ENCODE measurements at regions of chr5 and their contacts with region 1.

Region 1: DNA sequence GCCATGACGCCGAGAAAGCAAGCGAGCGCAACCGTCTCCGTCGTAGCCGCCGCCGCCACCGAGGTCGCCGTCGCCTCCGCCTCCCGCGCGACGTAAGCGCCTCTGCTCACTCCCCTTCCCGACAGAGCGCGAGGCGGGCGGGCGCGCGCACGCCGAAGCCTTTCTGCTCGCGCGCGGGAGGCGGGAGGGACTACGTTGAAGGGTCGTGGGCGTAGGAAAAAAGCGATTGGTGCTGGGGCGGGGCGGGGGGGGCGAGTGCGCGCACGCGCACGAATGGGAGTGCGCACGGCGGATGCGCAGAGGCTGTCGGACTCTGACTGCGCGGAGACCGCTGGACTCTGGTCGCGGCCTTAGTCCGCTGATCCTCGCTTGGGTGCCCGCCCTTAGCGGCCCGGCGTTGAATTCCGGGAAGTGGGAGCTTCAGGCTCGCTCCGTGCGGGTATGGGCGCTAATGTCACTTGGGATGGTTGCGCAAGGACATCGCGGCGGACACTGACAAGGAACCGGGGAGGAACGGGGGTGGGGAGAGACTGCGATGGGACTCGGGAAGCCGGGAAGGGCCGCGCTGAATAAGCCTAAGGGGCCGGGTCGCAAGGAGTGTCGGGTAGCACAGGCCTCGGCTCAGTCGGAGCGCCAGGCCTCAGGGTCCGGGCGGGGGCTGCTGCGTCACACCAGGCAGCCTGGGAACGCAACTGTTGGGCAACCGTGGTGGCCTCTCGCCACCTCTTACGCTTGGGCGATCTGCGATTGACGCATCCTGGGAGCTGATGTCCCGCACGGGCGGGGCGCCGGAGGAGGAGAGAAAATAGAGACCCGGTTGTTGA is at the start of gene CHD1:
- DNase-seq: peak; percentile 91 to 98 (median 94)
- ATAC-seq: peak; percentile 81
- H3K4me3 ChIP-seq: peak within 1 kb of the TSS; percentile 91
- H3K27ac ChIP-seq: peak within 1 kb of the TSS; percentile 100
- H3K4me1 ChIP-seq: peaks cover 5 to 9% of the 10 kb centered on the region in 2 experiments; a peak in 4 of 5 replicates
- H3K27me3 ChIP-seq: no peaks in the 10 kb centered on the region
- CTCF ChIP-seq: no peak
- EP300 ChIP-seq: peak; percentile 37; the same call in 1 of the 2 replicates
- POLR2A ChIP-seq: peak; percentile 98
- RAD21 ChIP-seq: no peak
- polyA plus RNA-seq, gene CHD1: 27.3 to 28.6 TPM

Region 2: GRCh38 chr5:96934708-96935558 is 1994.2 kb before region 1 on chr5:
- CTCF ChIA-PET with region 1: no interaction called
- POLR2A ChIA-PET with region 1: no interaction called
- in situ Hi-C with region 1: no loop called
- intact Hi-C with region 1: loop called (anchors 10 kb)
- DNase-seq: peak; percentile 85 to 94 (median 86)
- ATAC-seq: peak; percentile 85
- H3K4me3 ChIP-seq: peak overlapping the region; percentile 75
- H3K27ac ChIP-seq: peak overlapping the region; percentile 85
- H3K4me1 ChIP-seq: peaks cover 40 to 43% of the 10 kb centered on the region in 2 experiments
- H3K27me3 ChIP-seq: no peaks in the 10 kb centered on the region
- CTCF ChIP-seq: no peak; a peak in 1 of 6 replicates
- EP300 ChIP-seq: 0 out of 2 replicates have a peak, but pooled peaks have one; percentile 31
- POLR2A ChIP-seq: peak; percentile 90
- RAD21 ChIP-seq: no peak; a peak in 1 of 4 replicates

Region 3: DNA sequence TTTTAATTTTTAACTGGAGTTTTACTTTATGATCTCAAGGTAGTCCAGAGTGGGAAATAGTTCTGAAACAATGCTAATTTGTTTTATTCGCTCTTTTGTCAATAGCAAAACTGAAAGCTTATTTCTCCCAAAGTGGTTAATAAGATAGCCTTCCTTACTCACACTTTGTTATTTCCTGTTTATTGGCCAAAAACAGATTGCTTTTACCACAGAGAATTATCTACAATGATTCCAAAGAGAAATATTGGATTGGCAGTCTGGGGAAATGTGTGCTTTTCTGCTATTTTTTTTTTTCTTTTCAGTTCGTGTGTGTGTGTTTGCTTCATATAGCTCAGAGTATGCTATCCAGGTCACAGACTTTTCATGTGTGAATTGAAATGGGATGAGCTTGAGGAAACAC is 912.3 kb before region 1 on chr5:
- CTCF ChIA-PET with region 1: no interaction called
- POLR2A ChIA-PET with region 1: no interaction called
- in situ Hi-C with region 1: no loop called
- intact Hi-C with region 1: no loop called
- DNase-seq: no peak
- ATAC-seq: no peak
- H3K4me3 ChIP-seq: no peak overlapping the region
- H3K27ac ChIP-seq: no peak overlapping the region
- H3K4me1 ChIP-seq: no peaks in the 10 kb centered on the region
- H3K27me3 ChIP-seq: no peaks in the 10 kb centered on the region
- CTCF ChIP-seq: no peak
- EP300 ChIP-seq: no peak
- POLR2A ChIP-seq: no peak
- RAD21 ChIP-seq: no peak

Region 4: GRCh38 chr5:98917433-98917832 is 11.7 kb before region 1 on chr5:
- CTCF ChIA-PET with region 1: no interaction called
- POLR2A ChIA-PET with region 1: interaction called, 20 read pairs
- in situ Hi-C with region 1: no loop called
- intact Hi-C with region 1: no loop called
- DNase-seq: no peak
- ATAC-seq: no peak
- H3K4me3 ChIP-seq: no peak overlapping the region
- H3K27ac ChIP-seq: 0 out of 3 replicates have a peak overlapping the region, but pooled peaks have one; percentile 14
- H3K4me1 ChIP-seq: peaks cover 0 to 2% of the 10 kb centered on the region in 2 experiments; a peak in 1 of 5 replicates
- H3K27me3 ChIP-seq: no peaks in the 10 kb centered on the region
- CTCF ChIP-seq: no peak
- EP300 ChIP-seq: no peak
- POLR2A ChIP-seq: no peak
- RAD21 ChIP-seq: no peak

Region 5: GRCh38 chr5:98940581-98940980 is 11.5 kb after region 1 on chr5:
- CTCF ChIA-PET with region 1: no interaction called
- POLR2A ChIA-PET with region 1: interaction called, 38 read pairs
- in situ Hi-C with region 1: no loop called
- intact Hi-C with region 1: no loop called
- DNase-seq: no peak
- ATAC-seq: no peak; the same call in 1 of the 3 replicates
- H3K4me3 ChIP-seq: no peak overlapping the region
- H3K27ac ChIP-seq: no peak overlapping the region
- H3K4me1 ChIP-seq: peaks cover 0 to 24% of the 10 kb centered on the region in 2 experiments; a peak in 4 of 5 replicates
- H3K27me3 ChIP-seq: no peaks in the 10 kb centered on the region
- CTCF ChIP-seq: no peak
- EP300 ChIP-seq: no peak
- POLR2A ChIP-seq: no peak
- RAD21 ChIP-seq: no peak

Region 6: GRCh38 chr5:98954392-98955028 is 25.4 kb after region 1 on chr5:
- CTCF ChIA-PET with region 1: no interaction called
- POLR2A ChIA-PET with region 1: interaction called, 12 read pairs
- in situ Hi-C with region 1: no loop called
- intact Hi-C with region 1: loop called (anchors 2 kb)
- DNase-seq: peak; percentile 27 to 94 (median 58)
- ATAC-seq: peak; percentile 91
- H3K4me3 ChIP-seq: no peak overlapping the region
- H3K27ac ChIP-seq: peak overlapping the region; percentile 78
- H3K4me1 ChIP-seq: peaks cover 7 to 31% of the 10 kb centered on the region in 2 experiments; a peak in 3 of 5 replicates
- H3K27me3 ChIP-seq: no peaks in the 10 kb centered on the region
- CTCF ChIP-seq: no peak
- EP300 ChIP-seq: peak; percentile 78; the same call in 1 of the 2 replicates
- POLR2A ChIP-seq: peak; percentile 47; the same call in 1 of the 2 replicates
- RAD21 ChIP-seq: 0 out of 4 replicates have a peak, but pooled peaks of 1 of the 2 experiments have one; percentile 18

Region 7: GRCh38 chr5:98963019-98963418 is 33.9 kb after region 1 on chr5:
- CTCF ChIA-PET with region 1: no interaction called
- POLR2A ChIA-PET with region 1: interaction called, 6 read pairs
- in situ Hi-C with region 1: no loop called
- intact Hi-C with region 1: loop called (anchors 1 kb)
- DNase-seq: no peak
- ATAC-seq: no peak
- H3K4me3 ChIP-seq: no peak overlapping the region
- H3K27ac ChIP-seq: peak overlapping the region; percentile 3; the same call in 1 of the 3 replicates
- H3K4me1 ChIP-seq: peaks cover 9 to 29% of the 10 kb centered on the region in 2 experiments
- H3K27me3 ChIP-seq: no peaks in the 10 kb centered on the region
- CTCF ChIP-seq: no peak
- EP300 ChIP-seq: no peak
- POLR2A ChIP-seq: no peak
- RAD21 ChIP-seq: no peak

Region 8: GRCh38 chr5:99019812-99020697 is 91.0 kb after region 1 on chr5:
- CTCF ChIA-PET with region 1: no interaction called
- POLR2A ChIA-PET with region 1: no interaction called
- in situ Hi-C with region 1: loop called (anchors 10 kb)
- intact Hi-C with region 1: no loop called
- DNase-seq: peak in 2 of 4 experiments; percentile 59 to 63
- ATAC-seq: peak; percentile 88
- H3K4me3 ChIP-seq: no peak overlapping the region
- H3K27ac ChIP-seq: peak overlapping the region; percentile 66
- H3K4me1 ChIP-seq: peaks cover 0 to 22% of the 10 kb centered on the region in 2 experiments; a peak in 3 of 5 replicates
- H3K27me3 ChIP-seq: no peaks in the 10 kb centered on the region
- CTCF ChIP-seq: no peak
- EP300 ChIP-seq: no peak
- POLR2A ChIP-seq: no peak
- RAD21 ChIP-seq: no peak